Left cardiac atrium (tissue), 4 donors: ENCODE measurements at regions of chr12 and their contacts with region 1.

Region 1: GRCh38 chr12:26701604-26702215 is 131.3 kb downstream of the ITPR2 start:
- DNase-seq: no peak
- ATAC-seq: no peak

Region 2: DNA sequence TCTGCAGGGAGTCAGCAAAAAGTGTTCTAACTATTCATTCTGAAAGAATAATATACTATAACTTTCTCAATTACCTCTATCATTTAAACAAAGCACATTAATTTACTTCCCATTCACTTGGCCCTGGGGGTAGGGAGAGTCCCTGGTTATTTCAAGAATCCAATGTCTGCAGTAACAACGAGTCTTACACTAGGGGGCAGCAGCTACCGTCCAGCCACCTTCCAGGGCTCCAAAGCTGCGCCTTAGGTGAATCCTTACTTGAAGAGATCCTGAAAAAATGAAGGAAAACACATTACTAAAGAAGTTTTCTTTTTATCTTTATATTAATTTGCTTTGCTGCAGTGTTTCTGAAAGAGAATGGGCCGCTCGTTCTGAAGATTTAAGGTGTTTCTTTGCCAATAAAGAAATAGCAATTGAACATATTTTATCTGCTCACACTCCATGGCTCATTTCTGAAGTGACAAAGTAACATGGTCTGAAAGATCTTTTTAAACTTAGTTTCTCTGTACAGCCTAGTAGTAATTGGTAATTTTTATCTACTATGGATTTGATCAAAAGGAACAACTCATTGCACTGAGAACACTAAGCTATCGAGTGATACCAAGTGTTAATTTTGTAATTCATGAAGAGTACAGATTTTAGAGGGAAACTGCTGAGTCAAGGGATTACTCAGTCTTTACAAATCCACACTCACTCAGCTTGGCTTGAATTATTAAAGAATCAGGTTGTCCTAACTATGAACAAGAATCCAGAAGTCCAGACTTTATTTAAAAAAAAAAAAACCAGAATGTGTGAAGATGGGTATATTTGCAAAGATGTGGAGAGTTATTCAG is 604.4 kb before region 1 on chr12:
- intact Hi-C with region 1: loop called in 1 of 2 experiments (anchors 5 kb)
- DNase-seq: peak; percentile 68
- ATAC-seq: peak; percentile 96 to 98

Region 3: GRCh38 chr12:26821212-26821701 is 119.5 kb after region 1 on chr12:
- intact Hi-C with region 1: no loop called
- DNase-seq: no peak
- ATAC-seq: peak; percentile 47 to 84